AG04450 (cell line): ENCODE measurements at regions of chr2 and their contacts with region 1.

Region 1: GRCh38 chr2:100262555-100263320 is 59.6 kb downstream of the LONRF2 start:
- DNase-seq: no peak
- H3K4me3 ChIP-seq: no peak overlapping the region
- H3K27ac ChIP-seq: no peak overlapping the region
- H3K27me3 ChIP-seq: no peaks in the 10 kb centered on the region
- CTCF ChIP-seq: peak; percentile 99

Region 2: DNA sequence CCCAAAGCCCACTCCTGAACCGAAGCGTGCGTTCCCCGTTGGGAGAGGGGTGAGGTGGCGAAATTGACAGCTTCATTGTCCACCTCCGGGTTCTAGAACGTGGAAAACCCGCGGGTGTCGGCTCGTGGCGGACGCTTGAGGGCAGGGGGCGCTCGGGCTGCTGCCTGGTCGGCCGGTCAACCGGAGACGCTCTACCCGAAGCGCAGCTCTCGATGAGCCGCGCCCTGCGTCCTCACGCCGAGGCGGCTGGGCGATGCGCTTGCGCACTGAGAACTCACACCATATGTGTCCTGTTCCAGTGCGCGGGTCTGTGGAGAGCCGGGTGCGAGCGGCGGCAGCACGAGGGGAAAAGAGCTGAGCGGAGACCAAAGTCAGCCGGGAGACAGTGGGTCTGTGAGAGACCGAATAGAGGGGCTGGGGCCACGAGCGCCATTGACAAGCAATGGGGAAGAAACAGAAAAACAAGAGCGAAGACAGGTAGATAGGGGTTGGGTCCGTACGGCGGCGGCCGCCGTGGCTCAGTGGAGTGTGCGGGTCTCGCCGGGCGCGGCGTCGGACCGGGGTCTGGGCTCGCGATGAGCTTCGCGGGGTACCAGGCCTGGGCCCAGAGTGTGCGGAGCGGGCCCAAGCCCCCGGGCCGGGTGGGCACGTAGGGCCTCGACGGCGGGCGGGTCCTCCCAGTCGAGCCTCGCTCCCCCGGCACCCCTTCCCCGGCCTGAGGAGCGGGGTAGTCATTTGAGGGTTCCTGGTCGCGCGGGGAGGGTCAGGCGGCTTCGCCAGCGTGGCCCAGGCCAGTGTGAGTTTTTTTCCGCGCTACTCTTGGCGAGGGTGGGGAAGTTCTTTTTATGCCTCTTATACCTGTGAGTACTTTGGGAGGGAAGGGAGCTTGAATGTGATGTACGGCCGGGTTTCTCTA is 925.4 kb before region 1 on chr2 and contains the start of gene EIF5B:
- CTCF ChIA-PET with region 1: interaction called, 25 read pairs
- POLR2A ChIA-PET with region 1: no interaction called
- DNase-seq: peak; percentile 93
- H3K4me3 ChIP-seq: peak within 1 kb of the TSS; percentile 98
- H3K27ac ChIP-seq: peak within 1 kb of the TSS; percentile 86
- H3K27me3 ChIP-seq: no peaks in the 10 kb centered on the region
- CTCF ChIP-seq: peak; percentile 76
- polyA plus RNA-seq, gene EIF5B: 18.7 and 25.2 TPM in 2 replicates

Region 3: GRCh38 chr2:99559075-99559662 is 703.6 kb before region 1 on chr2:
- CTCF ChIA-PET with region 1: interaction called, 152 read pairs
- POLR2A ChIA-PET with region 1: no interaction called
- DNase-seq: peak; percentile 36
- H3K4me3 ChIP-seq: no peak overlapping the region
- H3K27ac ChIP-seq: no peak overlapping the region
- H3K27me3 ChIP-seq: no peaks in the 10 kb centered on the region
- CTCF ChIP-seq: peak; percentile 98

Region 4: GRCh38 chr2:100246163-100247145 is 16.3 kb before region 1 on chr2:
- CTCF ChIA-PET with region 1: interaction called, 19 read pairs
- POLR2A ChIA-PET with region 1: no interaction called
- DNase-seq: no peak
- H3K4me3 ChIP-seq: no peak overlapping the region
- H3K27ac ChIP-seq: no peak overlapping the region
- H3K27me3 ChIP-seq: peaks cover 4% of the 10 kb centered on the region
- CTCF ChIP-seq: peak; percentile 45

Region 5: DNA sequence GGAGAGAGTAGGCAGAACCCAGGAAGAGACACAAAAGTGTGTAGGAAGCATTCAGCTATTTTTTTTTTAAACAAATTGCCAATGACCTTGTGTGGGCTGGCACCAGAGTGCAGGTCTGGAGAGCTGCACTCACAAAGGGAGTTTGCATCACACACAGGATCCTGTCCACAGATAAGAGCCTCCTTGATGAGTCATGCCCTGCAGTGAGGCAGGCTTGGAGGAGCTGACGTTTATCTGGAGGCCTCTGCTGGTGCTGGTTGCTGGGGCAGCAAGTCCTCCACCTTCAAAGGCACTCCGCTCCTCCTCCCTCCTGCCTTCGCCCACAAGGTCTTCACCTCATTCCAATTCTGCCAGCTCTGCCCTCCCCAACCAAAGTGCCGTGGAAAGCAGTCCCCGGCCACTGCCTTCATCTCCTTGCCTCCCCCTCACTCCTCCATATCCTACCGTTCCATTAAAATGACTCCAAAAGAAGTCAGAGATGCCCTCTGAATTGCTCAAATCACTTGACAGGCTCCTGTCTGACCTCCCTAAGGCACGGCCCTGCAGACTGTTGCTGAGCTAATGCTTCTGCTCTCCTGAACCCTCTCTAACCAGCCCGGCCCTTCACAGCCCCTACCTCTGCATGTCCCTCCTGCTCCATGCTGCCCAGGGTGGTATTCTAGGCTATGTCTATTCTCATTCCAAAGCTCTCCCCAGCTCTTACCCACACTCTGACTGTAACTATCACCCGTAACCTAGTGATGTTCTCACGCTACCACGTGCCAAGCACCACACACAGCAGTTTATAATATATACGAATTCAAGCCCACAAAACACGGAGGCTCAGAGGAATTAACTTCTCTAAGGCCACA is 28.6 kb after region 1 on chr2:
- CTCF ChIA-PET with region 1: interaction called, 42 read pairs
- POLR2A ChIA-PET with region 1: no interaction called
- DNase-seq: peak; percentile 92
- H3K4me3 ChIP-seq: no peak overlapping the region
- H3K27ac ChIP-seq: peak overlapping the region; percentile 96
- H3K27me3 ChIP-seq: no peaks in the 10 kb centered on the region
- CTCF ChIP-seq: no peak

Region 6: GRCh38 chr2:100422320-100423055 is 159.8 kb after region 1 on chr2:
- CTCF ChIA-PET with region 1: interaction called, 19 read pairs
- POLR2A ChIA-PET with region 1: no interaction called
- DNase-seq: no peak
- H3K4me3 ChIP-seq: no peak overlapping the region
- H3K27ac ChIP-seq: no peak overlapping the region
- H3K27me3 ChIP-seq: peaks cover 14% of the 10 kb centered on the region
- CTCF ChIP-seq: peak; percentile 71